ENCODE measurements at regions of chr2 and their contacts with region 1.

Region 1: GRCh38 chr2:207769597-207770486 is at the start of gene FZD5:
- DNase-seq: peak; percentile 98
- ATAC-seq: peak; percentile 87
- H3K4me3 ChIP-seq: peak within 1 kb of the TSS; percentile 80 to 98 (median 88)
- H3K27ac ChIP-seq: peak within 1 kb of the TSS; percentile 92
- H3K4me1 ChIP-seq: peaks cover 55% of the 10 kb centered on the region
- H3K27me3 ChIP-seq: no peaks in the 10 kb centered on the region; a peak in 1 of 5 replicates
- CTCF ChIP-seq: peak; percentile 87
- EP300 ChIP-seq: peak in 1 of 2 experiments; percentile 44; a peak in 2 of 4 replicates
- POLR2A ChIP-seq: peak in 1 of 2 experiments; percentile 91; a peak in 2 of 4 replicates
- RAD21 ChIP-seq: peak; percentile 100
- total RNA-seq, gene FZD5: 28.9 and 34.3 TPM in 2 replicates

Region 2: DNA sequence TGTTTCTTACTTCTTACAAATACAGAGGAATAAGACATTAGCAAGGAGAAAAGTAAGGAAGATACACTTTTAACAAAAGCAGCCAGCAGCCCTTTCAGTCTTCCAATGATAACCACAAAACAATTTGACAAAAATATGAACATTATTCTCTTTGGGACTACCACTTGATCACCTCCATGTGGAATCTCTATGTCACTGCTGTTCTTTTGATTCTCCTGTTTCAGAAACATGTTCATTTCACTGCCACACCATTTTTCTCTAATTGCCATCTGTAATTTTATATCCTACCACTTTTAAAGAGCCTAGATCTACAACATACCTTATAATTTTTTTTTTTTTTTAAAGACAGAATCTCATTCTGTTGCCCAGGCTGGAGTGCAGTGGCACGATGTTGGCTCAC is 1694.7 kb before region 1 on chr2:
- CTCF ChIA-PET with region 1: no interaction called
- POLR2A ChIA-PET with region 1: no interaction called
- in situ Hi-C with region 1: no loop called
- intact Hi-C with region 1: no loop called
- DNase-seq: no peak
- ATAC-seq: no peak
- H3K4me3 ChIP-seq: no peak overlapping the region
- H3K27ac ChIP-seq: no peak overlapping the region
- H3K4me1 ChIP-seq: peaks cover 53% of the 10 kb centered on the region
- H3K27me3 ChIP-seq: no peaks in the 10 kb centered on the region
- CTCF ChIP-seq: no peak
- EP300 ChIP-seq: no peak
- POLR2A ChIP-seq: no peak
- RAD21 ChIP-seq: no peak

Region 3: GRCh38 chr2:207625018-207625907 is 144.6 kb before region 1 on chr2 and contains the start of gene METTL21A:
- CTCF ChIA-PET with region 1: no interaction called
- POLR2A ChIA-PET with region 1: no interaction called
- in situ Hi-C with region 1: no loop called
- intact Hi-C with region 1: no loop called
- DNase-seq: peak; percentile 94
- ATAC-seq: peak; percentile 80
- H3K4me3 ChIP-seq: peak within 1 kb of the TSS; percentile 80 to 92 (median 89)
- H3K27ac ChIP-seq: peak within 1 kb of the TSS; percentile 87
- H3K4me1 ChIP-seq: peaks cover 66% of the 10 kb centered on the region
- H3K27me3 ChIP-seq: no peaks in the 10 kb centered on the region; a peak in 1 of 5 replicates
- CTCF ChIP-seq: peak; percentile 92
- EP300 ChIP-seq: peak in 1 of 2 experiments; percentile 68; a peak in 3 of 4 replicates
- POLR2A ChIP-seq: peak; percentile 83 to 88
- RAD21 ChIP-seq: peak; percentile 69
- total RNA-seq, gene METTL21A: 61.2 and 65.1 TPM in 2 replicates

Region 4: GRCh38 chr2:207805566-207806226 is 35.9 kb after region 1 on chr2:
- CTCF ChIA-PET with region 1: no interaction called
- POLR2A ChIA-PET with region 1: interaction called, 105 read pairs
- in situ Hi-C with region 1: no loop called
- intact Hi-C with region 1: loop called (anchors 5 kb)
- DNase-seq: peak; percentile 39
- ATAC-seq: peak; percentile 15; the same call in 1 of the 3 replicates
- H3K4me3 ChIP-seq: no peak overlapping the region
- H3K27ac ChIP-seq: peak overlapping the region; percentile 43
- H3K4me1 ChIP-seq: peaks cover 61% of the 10 kb centered on the region
- H3K27me3 ChIP-seq: no peaks in the 10 kb centered on the region
- CTCF ChIP-seq: no peak
- EP300 ChIP-seq: no peak
- POLR2A ChIP-seq: no peak
- RAD21 ChIP-seq: no peak

Region 5: DNA sequence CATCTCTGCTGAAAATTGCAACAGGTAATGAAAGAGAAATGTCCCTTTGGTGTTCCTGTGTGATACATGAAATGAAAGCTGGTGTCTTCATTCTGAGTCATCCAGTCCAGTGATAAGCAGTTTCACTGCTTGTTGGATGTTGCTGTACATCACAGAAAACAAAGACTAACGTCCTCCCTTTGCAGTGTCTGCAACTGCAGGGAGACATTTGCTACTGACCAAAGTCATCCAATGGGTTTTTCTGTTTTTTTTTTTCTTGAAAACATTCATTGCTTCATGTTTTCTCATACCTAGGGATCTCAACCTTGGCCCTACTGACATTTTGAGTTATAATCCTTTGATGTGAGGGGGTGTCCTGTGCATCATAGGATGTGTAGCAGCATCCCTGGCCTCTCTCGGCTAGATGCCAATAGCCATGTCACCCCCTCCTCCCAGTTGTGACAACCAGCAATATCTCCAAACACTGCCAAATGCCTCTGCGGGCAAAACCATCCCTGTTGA is 63.5 kb after region 1 on chr2:
- CTCF ChIA-PET with region 1: no interaction called
- POLR2A ChIA-PET with region 1: interaction called, 67 read pairs
- in situ Hi-C with region 1: loop called (anchors 5 kb)
- intact Hi-C with region 1: no loop called
- DNase-seq: peak; percentile 87
- ATAC-seq: peak; percentile 33
- H3K4me3 ChIP-seq: no peak overlapping the region
- H3K27ac ChIP-seq: peak overlapping the region; percentile 16
- H3K4me1 ChIP-seq: peaks cover 80% of the 10 kb centered on the region
- H3K27me3 ChIP-seq: no peaks in the 10 kb centered on the region
- CTCF ChIP-seq: no peak
- EP300 ChIP-seq: no peak; a peak in 1 of 4 replicates
- POLR2A ChIP-seq: no peak
- RAD21 ChIP-seq: no peak

Region 6: GRCh38 chr2:207896525-207897295 is 126.9 kb after region 1 on chr2:
- CTCF ChIA-PET with region 1: interaction called, 3 read pairs
- POLR2A ChIA-PET with region 1: interaction called, 25 read pairs
- in situ Hi-C with region 1: no loop called
- intact Hi-C with region 1: loop called (anchors 1 kb)
- DNase-seq: peak; percentile 46
- ATAC-seq: peak; percentile 81
- H3K4me3 ChIP-seq: no peak overlapping the region; a peak in 1 of 6 replicates
- H3K27ac ChIP-seq: peak overlapping the region; percentile 88
- H3K4me1 ChIP-seq: peaks cover 81% of the 10 kb centered on the region
- H3K27me3 ChIP-seq: no peaks in the 10 kb centered on the region
- CTCF ChIP-seq: peak; percentile 30; the same call in 1 of the 2 replicates
- EP300 ChIP-seq: no peak
- POLR2A ChIP-seq: no peak
- RAD21 ChIP-seq: no peak

Region 7: GRCh38 chr2:207933396-207934065 is 163.7 kb after region 1 on chr2:
- CTCF ChIA-PET with region 1: no interaction called
- POLR2A ChIA-PET with region 1: interaction called, 27 read pairs
- in situ Hi-C with region 1: no loop called
- intact Hi-C with region 1: loop called (anchors 1 kb)
- DNase-seq: no peak
- ATAC-seq: no peak
- H3K4me3 ChIP-seq: no peak overlapping the region
- H3K27ac ChIP-seq: peak overlapping the region; percentile 9
- H3K4me1 ChIP-seq: peaks cover 63% of the 10 kb centered on the region
- H3K27me3 ChIP-seq: no peaks in the 10 kb centered on the region
- CTCF ChIP-seq: no peak
- EP300 ChIP-seq: no peak
- POLR2A ChIP-seq: no peak
- RAD21 ChIP-seq: no peak

Measured in HepG2 (cell line).